T-cell (primary cell): ENCODE measurements at regions of chr14 and their contacts with region 1.

Region 1: DNA sequence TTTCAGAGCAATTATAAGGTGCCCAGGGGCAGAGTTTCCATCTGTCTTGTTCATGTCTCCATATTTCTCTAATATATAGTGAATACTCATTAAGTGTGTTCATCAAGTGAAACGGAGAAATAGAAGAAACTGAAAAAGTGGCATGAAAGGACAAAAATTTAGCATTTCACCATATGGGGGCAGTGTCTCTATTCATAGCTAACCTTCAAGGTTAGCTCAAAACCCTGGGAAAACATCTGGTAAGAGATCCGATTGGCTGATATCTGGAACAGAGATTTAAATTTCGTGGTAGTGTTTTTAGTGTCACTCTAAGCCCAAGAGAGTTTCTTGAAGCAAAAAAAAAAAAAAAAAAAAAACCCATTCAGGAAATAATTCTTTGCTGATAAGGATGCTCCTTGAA is 367.5 kb downstream of the DAD1 start:
- DNase-seq: peak in 1 of 35 experiments; percentile 40
- ATAC-seq: peak in 1 of 4 experiments; percentile 47
- H3K4me3 ChIP-seq: no peak overlapping the region
- H3K4me3 Mint-ChIP-seq: peak overlapping the region; percentile 50 to 70 (median 69)
- H3K27ac ChIP-seq: no peak overlapping the region
- H3K27ac Mint-ChIP-seq: peak overlapping the region; percentile 58 to 59
- H3K4me1 ChIP-seq: peaks cover 0 to 8% of the 10 kb centered on the region in 2 experiments
- H3K4me1 Mint-ChIP-seq: peaks cover 0 to 20% (median 14%) of the 10 kb centered on the region in 3 donors
- H3K27me3 ChIP-seq: no peaks in the 10 kb centered on the region
- H3K27me3 Mint-ChIP-seq: no peaks in the 10 kb centered on the region

Region 2: GRCh38 chr14:21269252-21270046 is 952.1 kb before region 1 on chr14 and contains the start of gene HNRNPC:
- CTCF ChIA-PET with region 1: no interaction called
- POLR2A ChIA-PET with region 1: interaction called in 1 of 2 experiments, 17 read pairs
- DNase-seq: peak; percentile 99 to 100 (median 100)
- ATAC-seq: peak; percentile 90 to 91 (median 91)
- H3K4me3 ChIP-seq: peak within 1 kb of the TSS; percentile 91 to 92
- H3K4me3 Mint-ChIP-seq: peak within 1 kb of the TSS; percentile 90 to 100 (median 100)
- H3K27ac ChIP-seq: peak within 1 kb of the TSS; percentile 97
- H3K27ac Mint-ChIP-seq: peak within 1 kb of the TSS; percentile 100
- H3K4me1 ChIP-seq: peaks cover 23 to 30% of the 10 kb centered on the region in 2 experiments
- H3K4me1 Mint-ChIP-seq: peaks cover 36 to 45% (median 38%) of the 10 kb centered on the region in 3 donors
- H3K27me3 ChIP-seq: no peaks in the 10 kb centered on the region
- H3K27me3 Mint-ChIP-seq: no peaks in the 10 kb centered on the region
- total RNA-seq, gene HNRNPC: 417 to 530 (median 441) TPM

Region 3: GRCh38 chr14:22200977-22201605 is 20.4 kb before region 1 on chr14:
- CTCF ChIA-PET with region 1: interaction called, 3 to 10 read pairs
- POLR2A ChIA-PET with region 1: no interaction called
- DNase-seq: peak in 1 of 35 experiments; percentile 60
- ATAC-seq: peak; percentile 27 to 81 (median 66)
- H3K4me3 ChIP-seq: no peak overlapping the region
- H3K4me3 Mint-ChIP-seq: no peak overlapping the region
- H3K27ac ChIP-seq: no peak overlapping the region
- H3K27ac Mint-ChIP-seq: no peak overlapping the region
- H3K4me1 ChIP-seq: no peaks in the 10 kb centered on the region
- H3K4me1 Mint-ChIP-seq: peaks cover 3 to 7% (median 4%) of the 10 kb centered on the region in 3 donors
- H3K27me3 ChIP-seq: no peaks in the 10 kb centered on the region
- H3K27me3 Mint-ChIP-seq: no peaks in the 10 kb centered on the region

Region 4: GRCh38 chr14:22314181-22314820 is 92.8 kb after region 1 on chr14:
- CTCF ChIA-PET with region 1: interaction called in 1 of 2 experiments, 12 read pairs
- POLR2A ChIA-PET with region 1: no interaction called
- DNase-seq: peak in 4 of 35 experiments; percentile 1 to 43 (median 12)
- ATAC-seq: peak; percentile 36 to 59 (median 37)
- H3K4me3 ChIP-seq: no peak overlapping the region
- H3K4me3 Mint-ChIP-seq: peak overlapping the region in 2 of 3 donors; percentile 31 to 34
- H3K27ac ChIP-seq: no peak overlapping the region
- H3K27ac Mint-ChIP-seq: peak overlapping the region in 1 of 2 donors; percentile 39
- H3K4me1 ChIP-seq: no peaks in the 10 kb centered on the region
- H3K4me1 Mint-ChIP-seq: no peaks in the 10 kb centered on the region
- H3K27me3 ChIP-seq: no peaks in the 10 kb centered on the region
- H3K27me3 Mint-ChIP-seq: no peaks in the 10 kb centered on the region

Region 5: DNA sequence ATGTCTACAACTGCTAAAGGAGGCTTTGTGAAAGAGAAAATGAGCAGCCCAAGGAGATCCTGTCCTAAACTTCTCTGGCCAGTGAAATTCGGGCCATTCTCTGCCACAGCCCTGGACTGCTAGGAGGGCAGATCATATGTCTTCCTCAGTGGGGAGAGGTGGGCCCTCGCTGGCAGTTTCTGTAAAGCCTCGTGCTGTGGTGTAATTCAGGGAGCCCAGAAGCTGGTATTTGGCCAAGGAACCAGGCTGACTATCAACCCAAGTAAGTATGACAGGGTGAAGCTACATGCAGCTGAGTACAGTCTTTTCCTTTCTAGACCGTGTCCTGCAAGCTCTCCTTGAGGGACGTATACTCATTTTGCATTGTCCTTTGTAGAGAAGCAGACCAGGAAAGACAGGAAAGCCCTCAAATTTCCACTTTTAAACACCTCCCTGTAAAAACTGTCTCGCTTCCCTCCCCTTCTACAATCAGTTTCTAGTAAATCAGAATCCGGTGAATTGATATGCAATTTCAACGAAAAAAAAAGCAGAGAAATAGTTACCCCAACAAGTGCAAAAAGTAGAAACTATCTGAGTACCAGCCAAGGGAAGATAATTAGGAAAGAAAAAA is 260.7 kb after region 1 on chr14:
- CTCF ChIA-PET with region 1: interaction called in 1 of 2 experiments, 13 read pairs
- POLR2A ChIA-PET with region 1: no interaction called
- DNase-seq: no peak
- ATAC-seq: no peak
- H3K4me3 ChIP-seq: peak overlapping the region in 1 of 2 donors; percentile 46
- H3K4me3 Mint-ChIP-seq: peak overlapping the region; percentile 66 to 77 (median 75)
- H3K27ac ChIP-seq: peak overlapping the region; percentile 58
- H3K27ac Mint-ChIP-seq: peak overlapping the region; percentile 85 to 90
- H3K4me1 ChIP-seq: peaks cover 0 to 2% of the 10 kb centered on the region in 2 experiments
- H3K4me1 Mint-ChIP-seq: peaks cover 0 to 33% (median 0%) of the 10 kb centered on the region in 3 donors
- H3K27me3 ChIP-seq: no peaks in the 10 kb centered on the region
- H3K27me3 Mint-ChIP-seq: no peaks in the 10 kb centered on the region

Region 6: GRCh38 chr14:23034483-23035302 is 813.2 kb after region 1 on chr14 and contains the start of gene PSMB5:
- CTCF ChIA-PET with region 1: interaction called in 1 of 2 experiments, 15 read pairs
- POLR2A ChIA-PET with region 1: no interaction called
- DNase-seq: peak; percentile 71 to 95 (median 88)
- ATAC-seq: peak; percentile 90 to 95 (median 93)
- H3K4me3 ChIP-seq: peak within 1 kb of the TSS; percentile 79 to 85
- H3K4me3 Mint-ChIP-seq: peak within 1 kb of the TSS; percentile 88 to 98 (median 91)
- H3K27ac ChIP-seq: peak within 1 kb of the TSS; percentile 89
- H3K27ac Mint-ChIP-seq: peak within 1 kb of the TSS; percentile 98 to 99
- H3K4me1 ChIP-seq: peaks cover 9 to 20% of the 10 kb centered on the region in 2 experiments
- H3K4me1 Mint-ChIP-seq: peaks cover 26 to 33% (median 33%) of the 10 kb centered on the region in 3 donors
- H3K27me3 ChIP-seq: no peaks in the 10 kb centered on the region
- H3K27me3 Mint-ChIP-seq: no peaks in the 10 kb centered on the region
- total RNA-seq, gene PSMB5: 20.6 to 43.9 (median 38.0) TPM